ENCODE measurements at regions of chr12 and their contacts with region 1.

Region 1: DNA sequence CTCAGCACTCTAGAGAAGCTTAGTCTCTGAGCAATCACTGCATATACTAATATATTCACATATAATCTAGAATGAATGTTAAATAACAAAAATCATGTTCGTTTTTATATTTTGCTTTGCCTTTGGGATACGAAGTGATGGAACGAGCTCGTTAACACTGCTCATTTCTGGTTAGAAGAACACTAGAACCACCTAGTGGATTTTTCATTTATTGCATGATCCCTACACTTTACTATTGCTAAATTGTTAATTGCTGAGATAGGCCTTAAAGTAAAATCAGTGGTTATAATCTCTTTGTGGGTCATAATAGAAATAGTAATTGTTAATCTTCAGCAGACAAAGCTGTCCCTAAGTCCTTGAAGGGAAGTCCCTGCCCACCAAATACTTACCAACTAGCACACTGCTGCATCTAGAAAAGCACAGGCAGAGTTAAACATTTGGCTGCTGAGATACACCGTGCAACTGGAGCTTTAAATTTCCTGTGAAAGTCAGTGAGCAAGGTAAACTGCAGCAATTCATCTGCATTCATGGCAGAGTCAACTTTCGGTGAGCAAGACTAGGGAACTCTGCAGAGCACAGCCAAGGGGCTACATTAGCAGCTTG is 353.7 kb downstream of the APAF1 start:
- DNase-seq: peak; percentile 38
- ATAC-seq: peak; percentile 91
- H3K4me3 ChIP-seq: no peak overlapping the region
- H3K27ac ChIP-seq: no peak overlapping the region
- H3K4me1 ChIP-seq: no peaks in the 10 kb centered on the region
- H3K27me3 ChIP-seq: no peaks in the 10 kb centered on the region
- CTCF ChIP-seq: peak; percentile 80
- POLR2A ChIP-seq: no peak
- RAD21 ChIP-seq: peak; percentile 83

Region 2: DNA sequence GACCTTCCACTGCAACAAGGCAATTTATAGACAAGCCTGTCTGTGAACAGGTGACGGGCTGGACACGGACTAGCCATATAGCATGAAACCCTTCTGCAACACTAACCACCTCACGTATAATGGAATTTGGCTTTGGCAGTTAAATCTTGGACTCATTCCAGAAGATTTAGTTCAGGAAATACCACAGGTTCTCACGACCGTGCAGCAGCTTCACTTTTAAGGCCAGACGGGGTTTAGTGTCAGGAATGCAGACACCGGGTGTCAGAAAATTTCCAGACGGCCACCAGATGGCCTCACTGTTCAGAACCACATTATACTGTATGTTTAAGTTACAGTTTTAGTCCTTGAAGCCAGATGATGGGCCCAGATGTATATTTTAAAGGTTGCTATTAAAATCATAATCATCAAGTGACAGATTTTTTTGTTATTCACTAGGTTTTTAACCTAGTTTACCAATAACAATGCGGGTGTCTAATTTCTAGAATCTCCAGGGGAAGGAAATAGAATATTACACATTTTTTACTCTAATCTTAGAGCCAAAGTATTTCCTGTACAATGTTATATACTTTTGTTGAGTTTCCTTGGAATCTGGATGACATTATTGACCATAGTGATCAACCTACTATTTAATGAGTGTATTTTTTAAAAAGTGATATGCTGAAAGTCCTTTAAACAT is 573.9 kb before region 1 on chr12:
- CTCF ChIA-PET with region 1: no interaction called
- POLR2A ChIA-PET with region 1: no interaction called
- dilution Hi-C with region 1: no loop called
- in situ Hi-C with region 1: no loop called
- intact Hi-C with region 1: loop called (anchors 2 kb)
- DNase-seq: peak; percentile 73
- ATAC-seq: peak; percentile 94
- H3K4me3 ChIP-seq: no peak overlapping the region
- H3K27ac ChIP-seq: no peak overlapping the region
- H3K4me1 ChIP-seq: peaks cover 2% of the 10 kb centered on the region; the same call in 1 of the 2 replicates
- H3K27me3 ChIP-seq: no peaks in the 10 kb centered on the region; the same call in 1 of the 2 replicates
- CTCF ChIP-seq: peak; percentile 75
- POLR2A ChIP-seq: no peak
- RAD21 ChIP-seq: peak; percentile 63

Region 3: DNA sequence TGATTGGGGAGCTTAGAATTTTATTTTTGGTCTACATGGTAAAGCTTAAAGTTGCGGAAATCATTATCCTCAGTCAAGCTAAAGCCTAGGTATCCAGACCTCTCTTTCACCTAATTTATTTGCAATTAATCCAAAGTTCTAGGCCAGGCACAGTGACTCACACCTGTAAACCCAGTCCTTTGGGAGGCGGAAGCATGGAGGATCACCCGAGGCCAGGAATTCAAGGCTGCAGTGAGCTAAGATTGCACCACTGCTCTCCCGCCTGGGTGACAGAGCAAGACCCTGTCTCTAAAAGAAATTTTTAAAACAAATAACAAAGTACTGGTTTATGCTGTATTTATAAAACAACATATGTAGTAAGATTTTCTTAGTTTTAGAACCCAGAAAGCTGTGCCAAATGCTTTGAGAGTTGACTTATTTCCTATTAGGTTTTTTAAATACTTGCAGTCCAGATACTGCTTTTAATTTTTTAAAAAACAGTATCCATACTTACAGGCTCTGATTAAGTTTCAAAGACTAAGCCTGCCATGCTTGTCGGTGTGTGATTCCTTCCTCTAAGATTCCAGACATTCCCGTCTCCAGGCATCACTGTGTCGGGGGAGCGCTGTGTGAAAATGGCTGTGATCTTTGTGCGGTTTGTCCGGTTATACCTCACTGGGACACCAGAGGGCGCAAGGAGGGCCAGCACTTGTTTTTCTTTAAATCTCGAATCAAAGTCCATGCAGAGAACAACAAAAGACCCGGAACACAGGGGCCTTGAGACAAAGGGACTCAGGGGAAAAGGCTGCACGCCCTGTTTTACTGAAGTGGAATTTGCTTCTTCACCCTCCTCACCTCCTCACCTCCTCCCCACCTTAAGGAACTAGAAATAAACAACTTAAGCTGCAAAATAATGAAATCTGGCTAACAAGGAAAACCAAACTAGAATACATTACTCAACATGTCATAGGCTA is 508.0 kb before region 1 on chr12:
- CTCF ChIA-PET with region 1: no interaction called
- POLR2A ChIA-PET with region 1: no interaction called
- dilution Hi-C with region 1: no loop called
- in situ Hi-C with region 1: no loop called
- intact Hi-C with region 1: loop called (anchors 2 kb)
- DNase-seq: peak; percentile 90
- ATAC-seq: peak; percentile 100
- H3K4me3 ChIP-seq: no peak overlapping the region
- H3K27ac ChIP-seq: peak overlapping the region; percentile 87
- H3K4me1 ChIP-seq: no peaks in the 10 kb centered on the region
- H3K27me3 ChIP-seq: no peaks in the 10 kb centered on the region
- CTCF ChIP-seq: peak; percentile 93
- POLR2A ChIP-seq: no peak
- RAD21 ChIP-seq: peak; percentile 68

Region 4: GRCh38 chr12:98572010-98572409 is 426.8 kb before region 1 on chr12:
- CTCF ChIA-PET with region 1: no interaction called
- POLR2A ChIA-PET with region 1: no interaction called
- dilution Hi-C with region 1: no loop called
- in situ Hi-C with region 1: loop called (anchors 25 kb)
- intact Hi-C with region 1: loop called (anchors 2 kb)
- DNase-seq: no peak
- ATAC-seq: no peak
- H3K4me3 ChIP-seq: no peak overlapping the region
- H3K27ac ChIP-seq: no peak overlapping the region
- H3K4me1 ChIP-seq: no peaks in the 10 kb centered on the region
- H3K27me3 ChIP-seq: no peaks in the 10 kb centered on the region
- CTCF ChIP-seq: 0 out of 2 replicates have a peak, but pooled peaks have one; percentile 1
- POLR2A ChIP-seq: no peak
- RAD21 ChIP-seq: no peak

Region 5: GRCh38 chr12:98698603-98699463 is 300.0 kb before region 1 on chr12:
- CTCF ChIA-PET with region 1: interaction called, 5 read pairs
- POLR2A ChIA-PET with region 1: no interaction called
- dilution Hi-C with region 1: no loop called
- in situ Hi-C with region 1: no loop called
- intact Hi-C with region 1: loop called (anchors 1 kb)
- DNase-seq: peak; percentile 59
- ATAC-seq: peak; percentile 91
- H3K4me3 ChIP-seq: no peak overlapping the region
- H3K27ac ChIP-seq: no peak overlapping the region
- H3K4me1 ChIP-seq: peaks cover 2% of the 10 kb centered on the region; the same call in 1 of the 2 replicates
- H3K27me3 ChIP-seq: no peaks in the 10 kb centered on the region
- CTCF ChIP-seq: peak; percentile 55
- POLR2A ChIP-seq: no peak
- RAD21 ChIP-seq: peak; percentile 66

Region 6: GRCh38 chr12:98725476-98726247 is 273.1 kb before region 1 on chr12:
- CTCF ChIA-PET with region 1: interaction called, 10 read pairs
- POLR2A ChIA-PET with region 1: no interaction called
- dilution Hi-C with region 1: no loop called
- in situ Hi-C with region 1: loop called (anchors 10 kb)
- intact Hi-C with region 1: loop called (anchors 1 kb)
- DNase-seq: peak; percentile 80
- ATAC-seq: peak; percentile 97
- H3K4me3 ChIP-seq: no peak overlapping the region
- H3K27ac ChIP-seq: peak overlapping the region; percentile 13; the same call in 1 of the 2 replicates
- H3K4me1 ChIP-seq: peaks cover 6% of the 10 kb centered on the region; the same call in 1 of the 2 replicates
- H3K27me3 ChIP-seq: no peaks in the 10 kb centered on the region
- CTCF ChIP-seq: peak; percentile 68
- POLR2A ChIP-seq: no peak
- RAD21 ChIP-seq: peak; percentile 62

Region 7: GRCh38 chr12:98883231-98883630 is 115.6 kb before region 1 on chr12:
- CTCF ChIA-PET with region 1: no interaction called
- POLR2A ChIA-PET with region 1: no interaction called
- dilution Hi-C with region 1: no loop called
- in situ Hi-C with region 1: no loop called
- intact Hi-C with region 1: no loop called
- DNase-seq: no peak
- ATAC-seq: no peak
- H3K4me3 ChIP-seq: no peak overlapping the region
- H3K27ac ChIP-seq: no peak overlapping the region
- H3K4me1 ChIP-seq: no peaks in the 10 kb centered on the region
- H3K27me3 ChIP-seq: no peaks in the 10 kb centered on the region
- CTCF ChIP-seq: no peak
- POLR2A ChIP-seq: no peak
- RAD21 ChIP-seq: no peak